B cell (primary cell): ENCODE measurements at regions of chr19 and their contacts with region 1.

Region 1: DNA sequence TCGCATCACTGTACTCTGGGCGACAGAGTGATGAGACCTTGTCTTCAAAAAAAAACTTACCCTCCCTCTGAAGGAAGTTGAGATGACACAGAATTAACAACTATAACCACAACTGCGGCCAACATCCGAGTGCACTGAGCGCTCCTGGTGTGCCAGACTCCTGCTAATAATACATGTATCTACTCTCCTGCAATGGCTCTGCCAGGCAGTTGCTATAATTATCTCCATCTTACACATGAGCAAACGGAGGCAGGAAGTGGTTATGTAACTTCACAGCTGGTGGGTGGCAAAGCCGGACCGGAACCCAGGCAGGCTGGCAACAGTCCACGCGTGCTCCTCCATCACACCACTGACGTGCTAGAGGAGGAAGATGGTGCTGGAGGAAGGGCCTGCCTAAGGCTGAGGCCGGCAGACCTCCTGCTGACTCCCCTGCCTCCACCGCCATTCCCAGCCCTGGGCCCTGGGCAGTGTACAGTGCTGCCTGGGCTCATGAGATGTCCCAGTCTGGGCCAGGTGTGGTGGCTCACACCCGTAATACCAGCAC is 12.6 kb downstream of the XRCC1 start:
- DNase-seq: peak; percentile 93
- ATAC-seq: peak; percentile 85
- H3K4me3 ChIP-seq: peak overlapping the region in 3 of 5 experiments; percentile 7 to 45 (median 11)
- H3K4me3 Mint-ChIP-seq: peak overlapping the region; percentile 68
- H3K27ac ChIP-seq: peak overlapping the region; percentile 92
- H3K27ac Mint-ChIP-seq: peak overlapping the region; percentile 99
- H3K4me1 ChIP-seq: peaks cover 42 to 52% of the 10 kb centered on the region in 2 donors
- H3K4me1 Mint-ChIP-seq: peaks cover 56% of the 10 kb centered on the region
- H3K27me3 ChIP-seq: no peaks in the 10 kb centered on the region
- H3K27me3 Mint-ChIP-seq: no peaks in the 10 kb centered on the region
- CTCF ChIP-seq: no peak

Region 2: DNA sequence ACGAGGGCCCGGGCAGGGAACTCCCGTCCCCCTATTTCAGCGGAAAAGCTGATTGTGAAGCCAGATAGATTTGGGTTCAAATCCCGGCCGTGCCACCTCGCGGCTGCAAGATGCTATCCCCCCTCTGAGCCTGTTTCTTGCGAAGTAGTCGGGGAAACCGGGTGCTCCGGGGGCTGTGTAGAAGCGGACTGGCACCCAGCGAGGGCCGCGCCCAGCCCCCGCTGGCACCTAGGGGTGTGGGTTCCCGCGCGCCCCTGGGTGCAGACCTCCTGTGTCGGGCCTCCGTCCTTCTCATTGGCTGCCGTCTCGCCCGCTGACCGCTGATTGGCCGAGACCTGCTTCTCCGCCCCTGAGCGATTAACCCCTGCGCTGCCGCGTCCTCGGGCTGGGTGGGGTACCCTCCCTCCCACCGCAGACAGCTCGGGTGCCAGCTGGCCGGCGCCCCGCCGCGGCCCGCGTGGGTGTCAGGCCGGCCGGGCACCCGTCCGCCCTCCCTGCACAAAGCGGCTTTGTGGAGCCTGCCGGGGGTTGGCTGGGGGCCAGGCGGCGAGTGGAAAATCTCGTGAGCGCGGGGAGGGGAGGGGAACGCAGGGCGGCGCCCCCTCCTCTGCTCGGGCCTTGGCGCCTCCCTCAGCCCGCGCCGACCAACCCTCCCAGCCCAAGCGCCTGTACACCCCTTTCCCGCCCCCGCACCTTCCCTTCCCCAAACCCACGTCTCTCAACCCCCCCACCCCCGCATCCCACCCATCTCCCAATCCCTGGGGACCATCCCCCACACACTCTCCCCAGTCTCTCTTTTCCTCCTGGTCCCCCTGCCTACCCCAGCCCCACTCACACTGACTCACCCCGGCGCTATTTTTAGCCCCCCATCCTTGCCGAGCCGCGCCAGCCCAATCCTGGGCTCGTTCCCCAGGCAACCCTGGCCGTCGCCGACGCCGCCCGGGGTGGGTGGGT is 1282.3 kb before region 1 on chr19:
- CTCF ChIA-PET with region 1: no interaction called
- POLR2A ChIA-PET with region 1: no interaction called
- intact Hi-C with region 1: no loop called
- DNase-seq: peak; percentile 90
- ATAC-seq: peak; percentile 32
- H3K4me3 ChIP-seq: peak overlapping the region; percentile 35 to 90 (median 74)
- H3K4me3 Mint-ChIP-seq: peak overlapping the region; percentile 90
- H3K27ac ChIP-seq: peak overlapping the region; percentile 71 to 91
- H3K27ac Mint-ChIP-seq: peak overlapping the region; percentile 92
- H3K4me1 ChIP-seq: peaks cover 44 to 56% of the 10 kb centered on the region in 2 donors
- H3K4me1 Mint-ChIP-seq: peaks cover 35% of the 10 kb centered on the region
- H3K27me3 ChIP-seq: no peaks in the 10 kb centered on the region
- H3K27me3 Mint-ChIP-seq: no peaks in the 10 kb centered on the region
- CTCF ChIP-seq: no peak

Region 3: GRCh38 chr19:43575156-43575950 is 12.6 kb after region 1 on chr19 and contains the starts of genes PINLYP and XRCC1:
- CTCF ChIA-PET with region 1: interaction called, 5 read pairs
- POLR2A ChIA-PET with region 1: interaction called, 7 read pairs
- intact Hi-C with region 1: loop called (anchors 1 kb)
- DNase-seq: peak; percentile 99
- ATAC-seq: peak; percentile 99
- H3K4me3 ChIP-seq: peak within 1 kb of the TSS; percentile 67 to 98 (median 82)
- H3K4me3 Mint-ChIP-seq: peak within 1 kb of the TSS; percentile 97
- H3K27ac ChIP-seq: peak within 1 kb of the TSS; percentile 74 to 89
- H3K27ac Mint-ChIP-seq: peak within 1 kb of the TSS; percentile 92
- H3K4me1 ChIP-seq: peaks cover 16 to 29% of the 10 kb centered on the region in 2 donors
- H3K4me1 Mint-ChIP-seq: peaks cover 42% of the 10 kb centered on the region
- H3K27me3 ChIP-seq: no peaks in the 10 kb centered on the region
- H3K27me3 Mint-ChIP-seq: no peaks in the 10 kb centered on the region
- CTCF ChIP-seq: no peak
- total RNA-seq, gene PINLYP: 0.97 and 2.9 TPM in 2 replicates
- total RNA-seq, gene XRCC1: 38.2 and 47.4 TPM in 2 replicates

Region 4: DNA sequence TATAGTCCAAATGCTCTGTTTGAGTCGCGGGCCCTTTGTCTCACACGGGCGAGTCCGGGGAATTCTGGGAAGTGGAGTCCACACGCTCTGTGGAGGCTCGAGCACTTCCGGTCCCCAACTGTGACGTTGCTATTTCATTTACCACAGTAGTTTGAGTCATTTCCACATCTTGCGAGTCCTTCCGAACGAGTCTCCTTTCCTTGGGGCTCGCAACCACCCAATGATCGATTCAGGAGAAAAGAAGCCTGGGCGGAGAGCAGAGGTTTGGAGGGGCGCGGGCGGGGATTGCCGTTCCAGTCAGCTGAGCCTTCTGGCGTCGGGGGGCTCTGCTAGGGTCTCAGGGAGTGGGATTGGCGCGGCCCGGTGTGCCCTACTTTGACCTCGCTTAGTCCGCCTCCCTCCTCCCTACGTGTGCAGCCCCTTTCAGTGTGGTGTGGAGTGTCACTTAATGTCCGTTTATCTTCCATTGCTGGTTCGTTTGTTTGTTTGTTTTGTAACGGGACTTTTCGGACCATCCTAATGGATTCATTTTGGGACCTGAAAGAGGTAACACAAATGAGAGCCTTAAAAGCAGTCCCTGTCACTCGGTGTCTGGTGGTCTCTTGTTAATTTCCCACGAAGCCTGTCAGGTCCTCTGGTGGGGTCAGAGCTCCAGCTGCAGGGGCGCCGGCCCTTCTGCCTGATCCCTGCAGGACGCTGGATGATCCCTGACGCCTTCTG is 462.6 kb after region 1 on chr19 and contains the start of gene ZNF222:
- CTCF ChIA-PET with region 1: no interaction called
- POLR2A ChIA-PET with region 1: no interaction called
- intact Hi-C with region 1: no loop called
- DNase-seq: peak; percentile 83
- ATAC-seq: peak; percentile 97
- H3K4me3 ChIP-seq: peak within 1 kb of the TSS; percentile 72 to 98 (median 84)
- H3K4me3 Mint-ChIP-seq: peak within 1 kb of the TSS; percentile 96
- H3K27ac ChIP-seq: peak within 1 kb of the TSS; percentile 38 to 66
- H3K27ac Mint-ChIP-seq: peak within 1 kb of the TSS; percentile 88
- H3K4me1 ChIP-seq: peaks cover 11 to 13% of the 10 kb centered on the region in 2 donors
- H3K4me1 Mint-ChIP-seq: peaks cover 19% of the 10 kb centered on the region
- H3K27me3 ChIP-seq: no peaks in the 10 kb centered on the region
- H3K27me3 Mint-ChIP-seq: peaks cover 8% of the 10 kb centered on the region
- CTCF ChIP-seq: no peak
- total RNA-seq, gene ZNF222: 7.5 and 9.1 TPM in 2 replicates